Heart left ventricle (tissue), 16 donors: ENCODE measurements at regions of chr5 and their contacts with region 1.

Region 1: GRCh38 chr5:66742083-66742895 is 146.1 kb downstream of the MAST4 start:
- DNase-seq: peak; percentile 25 to 80 (median 49)
- ATAC-seq: peak in 3 of 4 donors; percentile 53 to 74 (median 58)
- H3K4me3 ChIP-seq: no peak overlapping the region
- H3K27ac ChIP-seq: peak overlapping the region in 7 of 12 donors; percentile 3 to 67 (median 43)
- H3K4me1 ChIP-seq: peaks cover 9 to 63% (median 38%) of the 10 kb centered on the region in 12 donors
- H3K27me3 ChIP-seq: no peaks in the 10 kb centered on the region
- CTCF ChIP-seq: peak; percentile 22 to 60 (median 44)
- POLR2A ChIP-seq: no peak

Region 2: DNA sequence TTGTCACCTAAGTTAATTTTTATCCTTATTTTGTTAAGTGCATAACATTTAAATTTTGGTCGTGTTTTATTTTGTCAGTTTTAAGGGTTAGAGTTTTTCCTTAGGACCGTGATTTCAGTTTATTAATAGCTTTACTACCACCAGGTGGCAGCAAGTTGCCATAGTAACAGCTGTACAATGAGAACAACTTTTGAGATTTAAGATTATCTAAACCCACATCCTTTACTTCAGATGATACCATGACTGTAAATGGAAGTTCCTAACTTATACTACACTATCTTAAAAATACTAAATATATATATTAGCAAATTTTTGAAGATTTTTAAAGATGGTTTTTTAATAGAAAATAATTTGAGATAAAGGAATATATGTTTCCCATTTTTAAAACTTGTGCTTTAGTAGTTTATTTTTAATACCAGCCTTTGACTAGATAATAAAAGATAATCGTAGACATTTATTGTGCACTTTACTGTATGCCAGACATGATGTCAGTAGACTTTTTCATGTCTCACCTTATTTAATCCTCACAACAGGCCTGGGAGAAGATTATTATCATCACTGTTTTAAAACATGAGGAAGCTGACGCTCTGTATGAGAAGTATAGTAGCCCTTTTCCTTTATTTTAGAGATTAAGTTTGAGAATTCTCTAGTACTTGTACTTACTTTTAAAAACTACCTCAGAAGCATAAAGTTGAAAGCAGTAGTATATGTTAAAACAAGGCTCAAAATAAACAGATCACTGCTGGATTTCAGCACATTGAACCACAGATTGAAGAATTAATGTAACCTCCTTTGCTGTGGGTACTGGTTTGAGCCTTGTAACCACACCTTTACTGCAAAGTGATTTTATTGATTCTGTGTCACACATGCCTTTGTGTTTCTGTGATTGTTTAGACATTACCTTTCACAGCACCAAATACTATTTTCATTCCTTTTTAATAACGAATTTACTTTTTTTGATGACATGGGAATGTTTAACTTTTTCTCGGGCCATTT is 570.6 kb before region 1 on chr5:
- intact Hi-C with region 1: loop called in 1 of 10 experiments (anchors 10 kb)
- DNase-seq: no peak
- ATAC-seq: peak in 2 of 4 donors; percentile 55 to 56
- H3K4me3 ChIP-seq: no peak overlapping the region
- H3K27ac ChIP-seq: no peak overlapping the region
- H3K4me1 ChIP-seq: peaks cover 0 to 10% (median 0%) of the 10 kb centered on the region in 12 donors
- H3K27me3 ChIP-seq: no peaks in the 10 kb centered on the region
- CTCF ChIP-seq: peak; percentile 14 to 71 (median 55)
- POLR2A ChIP-seq: no peak

Region 3: GRCh38 chr5:66595756-66596635 is 146.3 kb before region 1 on chr5 and contains the start of gene MAST4:
- intact Hi-C with region 1: loop called in 9 of 10 experiments (anchors 2 to 10 kb)
- DNase-seq: peak; percentile 92 to 95 (median 94)
- ATAC-seq: peak; percentile 93 to 97 (median 95)
- H3K4me3 ChIP-seq: peak within 1 kb of the TSS; percentile 69 to 97 (median 82)
- H3K27ac ChIP-seq: peak within 1 kb of the TSS; percentile 41 to 88 (median 71)
- H3K4me1 ChIP-seq: peaks cover 0 to 36% (median 12%) of the 10 kb centered on the region in 12 donors
- H3K27me3 ChIP-seq: peaks cover 0 to 41% (median 0%) of the 10 kb centered on the region in 9 donors
- CTCF ChIP-seq: no peak
- POLR2A ChIP-seq: peak; percentile 89 to 97
- total RNA-seq, gene MAST4: 54.9 to 96.2 (median 70.0) TPM

Region 4: GRCh38 chr5:66609615-66610014 is 132.7 kb before region 1 on chr5:
- intact Hi-C with region 1: loop called in 4 of 10 experiments (anchors 5 to 10 kb)
- DNase-seq: no peak
- ATAC-seq: no peak
- H3K4me3 ChIP-seq: no peak overlapping the region
- H3K27ac ChIP-seq: no peak overlapping the region
- H3K4me1 ChIP-seq: peaks cover 0 to 40% (median 9%) of the 10 kb centered on the region in 12 donors
- H3K27me3 ChIP-seq: no peaks in the 10 kb centered on the region
- CTCF ChIP-seq: no peak
- POLR2A ChIP-seq: no peak

Region 5: DNA sequence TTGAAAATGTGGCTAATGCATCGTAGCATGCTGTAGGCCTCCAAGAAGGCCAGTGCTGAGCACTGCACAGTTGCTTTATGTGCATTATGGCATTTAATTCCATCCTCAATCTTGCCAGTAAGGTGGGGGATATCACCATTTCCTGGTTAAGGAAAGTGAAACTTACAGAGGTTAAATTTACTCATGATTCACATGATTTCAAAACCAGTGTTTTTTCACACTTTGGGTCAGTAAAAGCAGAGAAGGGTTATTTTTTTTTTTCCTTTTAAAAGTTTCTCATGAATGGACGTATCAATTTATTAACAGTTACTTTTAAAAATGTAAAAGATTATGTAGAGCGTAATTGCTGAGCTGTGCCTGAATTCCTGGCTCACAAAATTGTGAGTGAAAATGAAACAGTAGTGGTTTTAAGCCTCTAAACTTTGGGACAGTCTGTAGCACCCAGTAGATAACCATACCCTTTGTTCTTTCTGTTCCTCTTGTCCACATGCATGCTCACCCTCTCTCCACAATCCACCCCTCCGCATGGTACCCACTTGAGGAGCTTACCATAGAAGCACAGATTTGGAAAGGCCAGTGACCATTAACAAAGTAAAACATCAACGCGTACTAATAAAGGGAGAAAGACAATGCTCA is 124.9 kb before region 1 on chr5:
- intact Hi-C with region 1: loop called in 2 of 10 experiments (anchors 5 to 10 kb)
- DNase-seq: no peak
- ATAC-seq: peak; percentile 33 to 68 (median 60)
- H3K4me3 ChIP-seq: no peak overlapping the region
- H3K27ac ChIP-seq: peak overlapping the region in 4 of 12 donors; percentile 5 to 46 (median 28)
- H3K4me1 ChIP-seq: peaks cover 2 to 67% (median 23%) of the 10 kb centered on the region in 12 donors
- H3K27me3 ChIP-seq: no peaks in the 10 kb centered on the region
- CTCF ChIP-seq: no peak
- POLR2A ChIP-seq: no peak

Region 6: DNA sequence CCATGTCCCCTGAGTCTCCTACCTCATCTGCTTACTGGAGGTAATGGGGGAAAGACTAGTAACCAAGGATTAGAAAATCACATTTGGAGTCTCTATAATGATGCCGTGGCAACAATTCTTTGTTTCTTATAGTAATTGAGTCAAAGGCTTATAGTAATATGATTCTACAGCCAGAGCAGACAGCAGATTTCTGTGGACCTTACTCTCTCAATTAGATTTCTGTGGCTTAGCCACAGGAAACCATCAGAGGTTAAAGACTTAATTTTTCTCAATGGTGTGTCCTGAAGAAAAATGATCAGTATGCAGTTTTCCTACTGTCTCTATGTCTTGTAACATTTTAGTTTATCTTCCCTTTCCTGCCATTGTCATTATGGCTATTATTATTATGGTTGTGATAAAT is 513.6 kb after region 1 on chr5:
- intact Hi-C with region 1: no loop called
- DNase-seq: no peak
- ATAC-seq: no peak
- H3K4me3 ChIP-seq: no peak overlapping the region
- H3K27ac ChIP-seq: no peak overlapping the region
- H3K4me1 ChIP-seq: no peaks in the 10 kb centered on the region
- H3K27me3 ChIP-seq: no peaks in the 10 kb centered on the region
- CTCF ChIP-seq: no peak
- POLR2A ChIP-seq: no peak